ENCODE measurements at regions of chr1 and their contacts with region 1.

Region 1: DNA sequence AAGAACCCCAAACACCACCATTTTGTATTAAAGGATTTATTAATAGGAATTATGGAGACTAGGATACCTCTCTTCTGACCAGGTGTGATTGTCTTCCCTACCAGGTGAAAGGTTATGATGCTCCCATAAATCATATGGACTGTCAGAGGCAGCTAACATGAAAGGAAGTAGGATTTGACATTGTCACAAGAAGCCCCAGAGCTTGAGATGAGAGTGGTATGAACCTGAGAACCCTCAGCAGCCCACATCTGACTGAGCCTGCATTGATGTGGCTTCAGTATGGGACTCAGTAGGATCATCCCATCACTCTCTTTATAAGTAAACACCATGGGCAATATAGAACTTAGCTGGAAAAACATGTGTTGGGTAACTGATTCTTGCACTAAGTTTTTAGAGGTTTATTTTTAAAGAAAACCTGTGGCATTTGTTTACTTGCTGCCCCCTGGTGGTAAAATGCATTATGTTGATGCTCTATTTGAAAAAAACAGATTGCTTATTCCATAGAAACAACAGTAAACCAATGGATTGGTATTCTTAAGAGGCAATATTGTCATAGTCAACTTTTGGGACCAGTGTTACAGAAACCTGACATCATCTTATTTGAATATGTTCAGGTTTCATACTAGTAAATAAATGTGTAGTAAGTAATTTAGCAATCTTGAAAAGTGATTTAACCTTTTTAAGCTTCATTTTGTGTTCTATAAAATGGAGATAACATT is 16.6 kb upstream of the CACYBP start:
- DNase-seq: peak; percentile 59
- ATAC-seq: no peak
- H3K4me3 ChIP-seq: no peak overlapping the region
- H3K27ac ChIP-seq: no peak overlapping the region
- H3K4me1 ChIP-seq: no peaks in the 10 kb centered on the region
- H3K27me3 ChIP-seq: no peaks in the 10 kb centered on the region
- CTCF ChIP-seq: peak; percentile 73

Region 2: GRCh38 chr1:174314433-174314832 is 668.7 kb before region 1 on chr1:
- CTCF ChIA-PET with region 1: no interaction called
- POLR2A ChIA-PET with region 1: no interaction called
- intact Hi-C with region 1: no loop called
- DNase-seq: no peak
- ATAC-seq: no peak
- H3K4me3 ChIP-seq: no peak overlapping the region
- H3K27ac ChIP-seq: no peak overlapping the region
- H3K4me1 ChIP-seq: no peaks in the 10 kb centered on the region
- H3K27me3 ChIP-seq: no peaks in the 10 kb centered on the region
- CTCF ChIP-seq: no peak

Region 3: DNA sequence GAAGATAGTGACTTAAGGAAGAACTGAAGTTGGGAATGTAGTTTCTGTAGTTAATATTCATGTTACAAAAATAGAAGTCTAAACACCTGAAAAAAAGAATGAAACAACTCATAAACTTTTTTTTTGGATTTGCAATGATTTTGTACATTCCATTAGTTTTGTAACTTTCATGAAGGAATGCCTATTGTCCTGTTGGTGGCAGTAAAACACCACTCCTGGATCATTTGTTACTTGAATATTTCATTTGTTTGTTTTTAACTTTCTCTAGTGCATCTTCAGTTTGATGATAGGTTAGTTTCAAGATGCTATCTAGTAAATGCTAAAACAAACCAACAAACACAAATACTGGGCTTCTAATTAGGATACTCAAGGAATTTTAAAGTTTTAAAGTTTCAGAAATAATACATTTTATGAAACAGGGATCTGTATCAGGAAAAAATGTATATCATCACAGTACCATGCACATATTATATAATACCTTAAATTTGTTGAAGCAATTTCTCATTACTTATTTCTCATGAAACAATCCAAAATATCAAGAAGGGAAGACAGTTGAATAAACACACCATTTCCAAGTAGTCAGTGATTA is 213.1 kb before region 1 on chr1:
- CTCF ChIA-PET with region 1: no interaction called
- POLR2A ChIA-PET with region 1: no interaction called
- intact Hi-C with region 1: loop called (anchors 1 kb)
- DNase-seq: peak; percentile 54
- ATAC-seq: no peak
- H3K4me3 ChIP-seq: no peak overlapping the region
- H3K27ac ChIP-seq: no peak overlapping the region
- H3K4me1 ChIP-seq: no peaks in the 10 kb centered on the region
- H3K27me3 ChIP-seq: no peaks in the 10 kb centered on the region
- CTCF ChIP-seq: peak; percentile 74

Region 4: GRCh38 chr1:174883409-174883808 is 99.7 kb before region 1 on chr1:
- CTCF ChIA-PET with region 1: no interaction called
- POLR2A ChIA-PET with region 1: no interaction called
- intact Hi-C with region 1: loop called (anchors 1 kb)
- DNase-seq: peak; percentile 65
- ATAC-seq: peak; percentile 92
- H3K4me3 ChIP-seq: no peak overlapping the region
- H3K27ac ChIP-seq: no peak overlapping the region
- H3K4me1 ChIP-seq: no peaks in the 10 kb centered on the region
- H3K27me3 ChIP-seq: no peaks in the 10 kb centered on the region
- CTCF ChIP-seq: peak; percentile 50

Region 5: DNA sequence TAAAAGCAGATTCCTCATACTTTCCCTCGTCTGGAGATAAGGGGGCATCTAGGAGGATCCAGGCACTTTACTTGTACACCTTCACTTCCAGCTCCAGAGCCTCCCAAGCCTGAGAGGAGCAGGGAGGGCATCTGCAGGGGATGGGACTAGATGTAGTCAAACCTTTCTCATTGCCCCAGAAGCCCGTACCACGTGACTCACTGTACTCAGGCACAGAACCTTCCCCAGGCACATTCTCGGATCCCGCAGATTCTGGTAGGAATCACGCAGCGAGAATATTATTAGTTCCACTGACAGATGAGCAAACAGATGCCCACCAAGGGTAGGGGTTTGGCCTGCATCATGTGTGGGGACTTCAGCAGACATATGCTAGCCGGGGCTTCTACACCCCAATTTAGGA is 785.5 kb after region 1 on chr1:
- CTCF ChIA-PET with region 1: no interaction called
- POLR2A ChIA-PET with region 1: no interaction called
- intact Hi-C with region 1: no loop called
- DNase-seq: no peak
- ATAC-seq: no peak
- H3K4me3 ChIP-seq: no peak overlapping the region
- H3K27ac ChIP-seq: no peak overlapping the region
- H3K4me1 ChIP-seq: no peaks in the 10 kb centered on the region
- H3K27me3 ChIP-seq: no peaks in the 10 kb centered on the region
- CTCF ChIP-seq: no peak

Measured in PC-3 (cell line).